Activated CD4-positive, alpha-beta memory T cell treated with anti-CD3 and anti-CD28 coated beads for 36 hours (primary cell): ENCODE measurements at regions of chr14 and their contacts with region 1.

Region 1: DNA sequence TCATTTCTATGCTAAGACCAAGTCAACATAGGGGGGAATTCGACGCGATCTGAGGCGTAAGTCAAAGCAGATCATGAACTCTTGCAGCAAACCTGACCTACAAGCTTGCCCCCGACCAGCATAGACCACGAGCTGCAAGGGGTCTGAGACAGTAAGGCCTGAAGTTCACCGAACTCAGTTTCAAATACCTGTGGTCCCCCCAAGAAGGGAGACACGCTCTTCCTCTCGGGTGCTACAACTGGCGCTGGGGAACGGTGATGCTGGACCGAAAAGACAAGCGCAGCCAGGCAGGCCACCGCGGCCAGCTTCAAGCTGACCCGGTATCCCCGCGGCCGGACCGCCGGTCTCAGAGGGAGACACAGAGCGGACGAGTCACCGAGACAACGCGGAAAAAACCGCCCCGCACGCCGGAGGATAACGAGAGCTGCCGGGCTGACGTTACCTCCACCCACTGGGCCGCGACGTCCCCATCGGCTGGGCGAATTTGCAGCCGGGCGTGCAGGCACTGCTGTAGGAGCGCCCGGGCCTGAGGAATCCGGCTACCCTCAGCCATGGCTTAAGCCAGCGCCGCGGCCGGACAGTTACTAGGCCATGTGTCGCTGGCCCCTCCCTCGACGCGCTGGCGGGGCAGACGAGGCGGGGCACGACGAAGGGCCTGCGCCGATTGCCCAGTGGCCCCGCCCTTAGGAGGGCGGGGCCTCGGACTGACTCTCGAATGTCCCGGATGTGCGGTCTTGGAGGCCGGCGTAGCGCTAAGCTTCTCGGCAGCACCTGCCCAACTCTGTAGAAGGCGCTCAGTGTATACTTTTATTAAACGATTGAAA is at the start of gene DTD2:
- DNase-seq: peak; percentile 94
- H3K4me3 Mint-ChIP-seq: peak within 1 kb of the TSS; percentile 95
- H3K27ac Mint-ChIP-seq: peak within 1 kb of the TSS; percentile 79
- H3K4me1 Mint-ChIP-seq: peaks cover 25% of the 10 kb centered on the region
- H3K27me3 Mint-ChIP-seq: no peaks in the 10 kb centered on the region
- total RNA-seq, gene DTD2: 19.1 to 20.2 TPM

Region 2: DNA sequence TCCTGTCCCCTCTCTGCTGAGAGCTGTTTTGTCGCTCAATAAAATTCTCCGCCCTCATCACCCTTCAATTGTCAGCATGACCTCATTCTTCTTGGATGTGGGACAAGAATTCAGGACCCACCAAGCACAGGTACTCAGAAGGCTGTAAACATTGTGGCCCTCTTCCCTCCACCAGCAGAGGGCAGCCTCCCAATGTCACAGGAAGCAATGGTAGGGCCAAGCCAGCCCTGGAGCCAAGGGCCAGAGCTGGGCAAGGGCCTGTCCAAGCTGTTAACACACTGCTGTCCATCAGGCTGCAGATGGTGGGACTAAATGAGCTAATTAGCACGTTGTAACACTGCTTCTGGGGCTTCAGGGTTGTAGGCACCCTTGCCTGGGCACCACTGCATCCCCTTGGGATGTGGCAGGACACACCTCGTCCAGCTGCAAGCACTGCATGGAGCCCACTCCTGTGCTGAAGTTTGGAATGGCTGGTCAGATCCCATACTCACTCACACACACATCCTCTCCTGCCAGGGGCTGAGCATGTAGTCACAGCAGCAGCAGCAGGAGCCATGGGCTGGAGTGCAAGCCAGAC is 186.8 kb before region 1 on chr14:
- CTCF ChIA-PET with region 1: no interaction called
- POLR2A ChIA-PET with region 1: no interaction called
- intact Hi-C with region 1: loop called (anchors 10 kb)
- DNase-seq: peak; percentile 49
- H3K4me3 Mint-ChIP-seq: no peak overlapping the region
- H3K27ac Mint-ChIP-seq: no peak overlapping the region
- H3K4me1 Mint-ChIP-seq: peaks cover 17% of the 10 kb centered on the region
- H3K27me3 Mint-ChIP-seq: no peaks in the 10 kb centered on the region

Region 3: GRCh38 chr14:31441271-31442110 is 15.6 kb before region 1 on chr14:
- CTCF ChIA-PET with region 1: no interaction called
- POLR2A ChIA-PET with region 1: no interaction called
- intact Hi-C with region 1: no loop called
- DNase-seq: no peak
- H3K4me3 Mint-ChIP-seq: no peak overlapping the region
- H3K27ac Mint-ChIP-seq: no peak overlapping the region
- H3K4me1 Mint-ChIP-seq: no peaks in the 10 kb centered on the region
- H3K27me3 Mint-ChIP-seq: no peaks in the 10 kb centered on the region

Region 4: GRCh38 chr14:31561155-31561846 is 104.2 kb after region 1 on chr14 and contains the start of gene NUBPL:
- CTCF ChIA-PET with region 1: no interaction called
- POLR2A ChIA-PET with region 1: no interaction called
- intact Hi-C with region 1: loop called (anchors 1 kb)
- DNase-seq: peak; percentile 98
- H3K4me3 Mint-ChIP-seq: peak within 1 kb of the TSS; percentile 95
- H3K27ac Mint-ChIP-seq: peak within 1 kb of the TSS; percentile 93
- H3K4me1 Mint-ChIP-seq: peaks cover 20% of the 10 kb centered on the region
- H3K27me3 Mint-ChIP-seq: peaks cover 1% of the 10 kb centered on the region
- total RNA-seq, gene NUBPL: 6.9 to 9.1 TPM

Region 5: GRCh38 chr14:31937721-31938346 is 480.8 kb after region 1 on chr14:
- CTCF ChIA-PET with region 1: no interaction called
- POLR2A ChIA-PET with region 1: no interaction called
- intact Hi-C with region 1: loop called (anchors 5 kb)
- DNase-seq: peak; percentile 91
- H3K4me3 Mint-ChIP-seq: peak overlapping the region; percentile 16
- H3K27ac Mint-ChIP-seq: peak overlapping the region; percentile 80
- H3K4me1 Mint-ChIP-seq: peaks cover 25% of the 10 kb centered on the region
- H3K27me3 Mint-ChIP-seq: no peaks in the 10 kb centered on the region